ENCODE measurements at regions of chr2 and their contacts with region 1.

Region 1: GRCh38 chr2:120094795-120095194 is 81.9 kb downstream of the EPB41L5 start:
- DNase-seq: no peak
- H3K4me3 ChIP-seq: no peak overlapping the region
- H3K27ac ChIP-seq: no peak overlapping the region
- H3K4me1 ChIP-seq: no peaks in the 10 kb centered on the region
- H3K27me3 ChIP-seq: no peaks in the 10 kb centered on the region
- CTCF ChIP-seq: no peak
- EP300 ChIP-seq: no peak
- POLR2A ChIP-seq: no peak

Region 2: DNA sequence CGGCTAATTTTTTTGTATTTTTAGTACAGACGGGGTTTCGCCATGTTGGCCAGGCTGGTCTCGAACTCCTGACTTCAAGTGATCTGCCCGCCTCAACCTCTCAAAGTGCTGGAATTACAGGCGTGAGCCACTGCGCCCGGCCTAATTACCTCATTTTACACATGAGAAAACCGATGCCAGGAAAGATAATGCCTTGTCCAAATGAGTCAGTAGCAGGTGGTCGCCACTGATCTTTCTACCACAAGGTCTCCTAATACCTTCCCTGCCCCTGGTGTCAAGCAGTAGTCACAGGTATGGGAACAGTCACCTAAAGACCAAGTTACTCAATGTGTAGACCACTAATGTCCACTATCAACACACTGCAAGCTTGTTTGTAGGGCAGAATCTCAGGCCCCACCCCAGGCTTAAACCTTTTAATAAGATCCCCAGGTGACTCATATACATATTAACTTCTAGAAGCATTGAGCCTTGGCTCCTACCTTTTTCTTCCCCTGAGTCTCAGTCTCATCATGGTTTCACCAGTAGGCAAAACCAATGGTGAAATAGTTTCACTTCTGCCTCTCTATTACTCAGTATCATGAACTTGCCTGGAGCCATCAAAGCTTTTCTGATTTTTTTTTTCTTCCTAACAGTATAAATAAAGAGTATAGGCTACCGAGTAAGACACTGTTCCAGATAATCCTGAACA is 88.8 kb before region 1 on chr2:
- intact Hi-C with region 1: no loop called
- DNase-seq: no peak
- H3K4me3 ChIP-seq: no peak overlapping the region
- H3K27ac ChIP-seq: no peak overlapping the region
- H3K4me1 ChIP-seq: no peaks in the 10 kb centered on the region
- H3K27me3 ChIP-seq: no peaks in the 10 kb centered on the region
- CTCF ChIP-seq: no peak
- EP300 ChIP-seq: no peak
- POLR2A ChIP-seq: no peak

Region 3: GRCh38 chr2:120066800-120067547 is 27.8 kb before region 1 on chr2:
- intact Hi-C with region 1: loop called (anchors 2 kb)
- DNase-seq: no peak
- H3K4me3 ChIP-seq: no peak overlapping the region
- H3K27ac ChIP-seq: no peak overlapping the region
- H3K4me1 ChIP-seq: peaks cover 0 to 31% (median 16%) of the 10 kb centered on the region in 4 donors
- H3K27me3 ChIP-seq: no peaks in the 10 kb centered on the region
- CTCF ChIP-seq: no peak
- EP300 ChIP-seq: no peak
- POLR2A ChIP-seq: no peak

Region 4: DNA sequence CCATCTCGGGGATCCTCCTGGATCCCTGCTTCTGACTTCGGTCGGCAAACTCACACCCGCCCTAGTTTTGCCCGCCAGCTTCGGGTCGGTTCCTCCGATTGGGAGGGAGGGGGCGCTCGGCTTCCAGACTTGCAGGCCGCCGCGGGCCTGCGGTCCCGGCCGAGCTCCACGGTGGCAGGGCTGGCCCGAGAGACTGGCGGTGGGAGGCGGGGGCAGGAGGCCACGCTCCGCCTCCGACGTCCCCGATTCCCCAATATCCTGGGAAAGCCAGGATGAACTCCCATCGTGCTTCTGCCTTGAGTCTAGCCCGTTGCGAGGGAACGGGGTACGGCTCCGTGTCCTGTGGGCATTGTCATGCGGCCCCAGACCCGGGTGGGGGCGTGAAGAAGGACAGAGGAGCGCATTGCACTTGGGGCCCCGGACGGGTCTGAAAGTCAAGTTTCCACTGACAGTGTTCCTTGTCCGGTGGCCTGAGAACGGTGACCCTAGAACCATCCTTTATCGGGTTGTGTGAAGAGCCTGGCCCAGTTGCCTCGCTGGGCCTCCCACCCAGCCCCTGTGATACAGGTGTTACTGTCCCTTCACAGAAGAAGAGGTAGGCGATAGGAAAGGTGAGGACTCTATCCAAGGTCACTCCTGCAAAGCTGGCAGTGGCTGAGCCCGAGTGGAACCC is 248.8 kb after region 1 on chr2:
- intact Hi-C with region 1: no loop called
- DNase-seq: peak; percentile 88
- H3K4me3 ChIP-seq: peak overlapping the region in 2 of 4 donors; percentile 5 to 55
- H3K27ac ChIP-seq: peak overlapping the region in 1 of 4 donors; percentile 51
- H3K4me1 ChIP-seq: peaks cover 0 to 46% (median 43%) of the 10 kb centered on the region in 4 donors
- H3K27me3 ChIP-seq: peaks cover 50 to 94% (median 77%) of the 10 kb centered on the region in 3 donors
- CTCF ChIP-seq: peak; percentile 54 to 74 (median 64)
- EP300 ChIP-seq: no peak
- POLR2A ChIP-seq: no peak

Region 5: GRCh38 chr2:120632796-120633646 is 538.2 kb after region 1 on chr2:
- intact Hi-C with region 1: no loop called
- DNase-seq: no peak
- H3K4me3 ChIP-seq: no peak overlapping the region
- H3K27ac ChIP-seq: no peak overlapping the region
- H3K4me1 ChIP-seq: peaks cover 0 to 13% (median 10%) of the 10 kb centered on the region in 4 donors
- H3K27me3 ChIP-seq: no peaks in the 10 kb centered on the region
- CTCF ChIP-seq: no peak
- EP300 ChIP-seq: no peak
- POLR2A ChIP-seq: no peak

Measured in sigmoid colon (tissue), 7 donors.